Transverse colon (tissue), 4 donors: ENCODE measurements at regions of chr1 and their contacts with region 1.

Region 1: GRCh38 chr1:12314333-12314903 is 84.6 kb downstream of the VPS13D start:
- DNase-seq: no peak
- H3K4me3 ChIP-seq: no peak overlapping the region
- H3K27ac ChIP-seq: peak overlapping the region; percentile 53 to 68 (median 55)
- H3K4me1 ChIP-seq: peaks cover 0 to 24% (median 2%) of the 10 kb centered on the region in 4 donors
- H3K27me3 ChIP-seq: no peaks in the 10 kb centered on the region
- CTCF ChIP-seq: peak in 4 of 5 experiments; percentile 26 to 51 (median 32)
- EP300 ChIP-seq: no peak
- POLR2A ChIP-seq: no peak

Region 2: DNA sequence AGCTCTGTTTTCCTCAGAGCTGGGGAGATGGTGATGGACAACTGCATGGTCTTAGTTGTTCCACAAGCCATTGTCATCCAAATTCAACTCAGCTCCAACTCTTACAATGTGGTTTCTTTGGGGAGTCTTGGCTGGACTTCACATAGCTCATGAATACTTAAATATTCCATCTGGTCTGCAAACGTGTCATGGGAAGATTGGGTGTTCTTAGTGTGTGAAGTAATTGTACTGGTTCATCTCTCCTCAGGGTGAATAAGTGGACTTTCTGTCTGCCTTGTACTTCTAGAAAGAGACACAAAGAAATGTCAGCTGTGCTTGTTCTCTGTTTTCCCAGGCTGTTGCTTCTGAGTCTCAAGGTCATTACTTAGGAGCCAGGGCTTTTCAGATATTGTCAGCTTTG is 22.0 kb after region 1 on chr1:
- in situ Hi-C with region 1: no loop called
- intact Hi-C with region 1: loop called (anchors 1 kb)
- DNase-seq: no peak
- H3K4me3 ChIP-seq: no peak overlapping the region
- H3K27ac ChIP-seq: no peak overlapping the region
- H3K4me1 ChIP-seq: peaks cover 5 to 38% (median 20%) of the 10 kb centered on the region in 4 donors
- H3K27me3 ChIP-seq: no peaks in the 10 kb centered on the region
- CTCF ChIP-seq: no peak
- EP300 ChIP-seq: no peak
- POLR2A ChIP-seq: no peak

Region 3: GRCh38 chr1:12619792-12620487 is 305.5 kb after region 1 on chr1:
- in situ Hi-C with region 1: loop called in 2 of 4 experiments (anchors 25 kb)
- intact Hi-C with region 1: loop called (anchors 10 kb)
- DNase-seq: peak; percentile 91
- H3K4me3 ChIP-seq: peak overlapping the region in 3 of 4 donors; percentile 54 to 85 (median 70)
- H3K27ac ChIP-seq: peak overlapping the region; percentile 92 to 96 (median 94)
- H3K4me1 ChIP-seq: peaks cover 21 to 50% (median 42%) of the 10 kb centered on the region in 4 donors
- H3K27me3 ChIP-seq: no peaks in the 10 kb centered on the region
- CTCF ChIP-seq: peak; percentile 95 to 99 (median 97)
- EP300 ChIP-seq: no peak
- POLR2A ChIP-seq: no peak

Region 4: GRCh38 chr1:12636098-12636950 is 321.9 kb after region 1 on chr1:
- in situ Hi-C with region 1: loop called in 2 of 4 experiments (anchors 25 kb)
- intact Hi-C with region 1: no loop called
- DNase-seq: no peak
- H3K4me3 ChIP-seq: no peak overlapping the region
- H3K27ac ChIP-seq: no peak overlapping the region
- H3K4me1 ChIP-seq: no peaks in the 10 kb centered on the region
- H3K27me3 ChIP-seq: no peaks in the 10 kb centered on the region
- CTCF ChIP-seq: no peak
- EP300 ChIP-seq: no peak
- POLR2A ChIP-seq: no peak

Region 5: DNA sequence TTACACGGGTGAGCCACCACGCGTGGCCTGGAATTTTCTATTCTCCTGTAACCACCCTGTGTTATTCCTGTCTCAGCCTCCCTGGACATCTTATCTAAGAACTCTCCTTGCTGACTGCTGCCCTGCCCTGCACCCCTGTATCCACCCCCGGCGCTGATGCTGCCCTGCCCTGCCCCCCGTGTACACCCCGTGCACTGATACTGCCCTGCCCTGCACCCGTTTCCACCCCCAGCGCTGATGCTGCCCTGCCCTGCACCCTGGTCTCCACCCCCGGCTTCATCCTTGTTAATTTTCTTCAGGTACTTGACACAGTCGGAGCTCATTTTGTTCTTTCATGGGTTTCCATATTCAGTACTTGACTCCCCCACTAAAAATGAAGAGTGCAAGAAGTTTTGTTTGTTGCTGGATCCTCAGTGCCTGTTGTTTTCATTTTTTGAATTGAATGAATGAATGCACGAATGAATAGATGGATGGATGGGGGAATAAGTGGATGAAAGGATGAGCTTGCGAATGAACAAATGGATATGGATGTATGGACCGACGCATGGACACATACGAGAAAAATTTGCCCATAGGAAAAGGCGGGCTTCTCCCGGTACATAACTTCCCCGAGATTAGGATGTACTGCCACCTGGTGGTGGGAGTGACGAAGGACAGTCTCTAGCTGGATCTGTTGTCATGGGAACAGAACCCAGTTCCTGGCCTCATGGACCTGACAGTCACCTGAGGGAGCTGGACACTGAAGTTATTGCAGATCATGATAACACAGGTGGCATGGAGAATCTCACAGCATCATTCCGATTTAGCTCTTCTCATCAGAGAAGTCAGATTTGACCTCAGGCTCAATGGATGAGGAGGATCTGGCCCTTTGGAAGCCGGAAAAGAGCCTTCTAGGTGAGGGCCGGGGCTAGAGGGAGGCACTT is 344.4 kb after region 1 on chr1:
- in situ Hi-C with region 1: loop called in 2 of 4 experiments (anchors 10 to 25 kb)
- intact Hi-C with region 1: loop called (anchors 5 kb)
- DNase-seq: peak; percentile 75
- H3K4me3 ChIP-seq: no peak overlapping the region
- H3K27ac ChIP-seq: no peak overlapping the region
- H3K4me1 ChIP-seq: no peaks in the 10 kb centered on the region
- H3K27me3 ChIP-seq: no peaks in the 10 kb centered on the region
- CTCF ChIP-seq: peak; percentile 91 to 96 (median 94)
- EP300 ChIP-seq: no peak
- POLR2A ChIP-seq: no peak